ENCODE measurements at regions of chr9 and their contacts with region 1.

Region 1: GRCh38 chr9:33223696-33224095 is 16.3 kb upstream of the SPINK4 start:
- DNase-seq: no peak
- H3K4me3 ChIP-seq: no peak overlapping the region
- H3K27ac ChIP-seq: no peak overlapping the region
- H3K4me1 ChIP-seq: peaks cover 0 to 5% of the 10 kb centered on the region in 2 donors
- H3K27me3 ChIP-seq: no peaks in the 10 kb centered on the region
- CTCF ChIP-seq: no peak
- POLR2A ChIP-seq: no peak

Region 2: DNA sequence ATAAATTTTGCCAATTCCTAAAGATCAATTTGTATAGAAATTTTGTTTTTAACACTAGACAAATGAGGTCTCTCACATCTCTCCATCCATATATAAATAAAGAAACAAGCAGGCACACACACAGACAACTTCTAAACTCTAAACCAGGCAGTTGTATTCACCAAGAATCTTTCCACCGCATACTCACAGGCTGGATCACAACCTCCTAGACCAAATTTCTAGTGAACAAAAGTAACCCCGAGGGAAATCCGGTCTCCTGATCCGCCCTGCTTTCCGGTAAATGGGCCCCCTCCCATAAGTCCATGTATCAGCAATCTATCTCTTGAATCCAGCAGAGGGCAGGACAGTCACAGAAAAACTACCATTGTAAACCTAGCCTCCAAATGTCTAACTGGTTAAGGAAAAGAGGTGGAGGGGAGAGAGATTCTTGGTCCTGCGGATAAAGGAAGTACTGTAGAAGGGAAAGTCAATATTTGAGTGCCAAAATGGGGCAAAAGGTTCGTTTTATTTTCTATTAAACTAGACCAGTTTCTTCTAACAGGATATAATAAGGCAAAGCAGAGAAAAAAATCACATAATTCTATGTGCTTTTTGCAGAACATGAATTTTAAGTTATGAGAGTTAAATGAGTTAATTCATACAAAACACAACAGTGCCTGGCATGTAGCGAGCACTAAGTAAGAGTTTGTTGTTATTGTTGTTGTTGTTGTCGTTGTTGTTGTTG is 142.4 kb before region 1 on chr9:
- intact Hi-C with region 1: loop called (anchors 5 kb)
- DNase-seq: peak; percentile 51 to 77
- H3K4me3 ChIP-seq: no peak overlapping the region
- H3K27ac ChIP-seq: peak overlapping the region; percentile 46 to 66
- H3K4me1 ChIP-seq: peaks cover 0 to 5% of the 10 kb centered on the region in 2 donors
- H3K27me3 ChIP-seq: no peaks in the 10 kb centered on the region
- CTCF ChIP-seq: peak; percentile 71 to 94 (median 88)
- POLR2A ChIP-seq: no peak

Region 3: GRCh38 chr9:33374634-33375213 is 151.0 kb after region 1 on chr9:
- intact Hi-C with region 1: no loop called
- DNase-seq: peak; percentile 68 to 85
- H3K4me3 ChIP-seq: no peak overlapping the region
- H3K27ac ChIP-seq: peak overlapping the region; percentile 77 to 79
- H3K4me1 ChIP-seq: no peaks in the 10 kb centered on the region
- H3K27me3 ChIP-seq: no peaks in the 10 kb centered on the region
- CTCF ChIP-seq: peak; percentile 85 to 92 (median 88)
- POLR2A ChIP-seq: no peak

Measured in uterus (tissue), 4 donors.